ENCODE measurements at regions of chr11 and their contacts with region 1.

Region 1: DNA sequence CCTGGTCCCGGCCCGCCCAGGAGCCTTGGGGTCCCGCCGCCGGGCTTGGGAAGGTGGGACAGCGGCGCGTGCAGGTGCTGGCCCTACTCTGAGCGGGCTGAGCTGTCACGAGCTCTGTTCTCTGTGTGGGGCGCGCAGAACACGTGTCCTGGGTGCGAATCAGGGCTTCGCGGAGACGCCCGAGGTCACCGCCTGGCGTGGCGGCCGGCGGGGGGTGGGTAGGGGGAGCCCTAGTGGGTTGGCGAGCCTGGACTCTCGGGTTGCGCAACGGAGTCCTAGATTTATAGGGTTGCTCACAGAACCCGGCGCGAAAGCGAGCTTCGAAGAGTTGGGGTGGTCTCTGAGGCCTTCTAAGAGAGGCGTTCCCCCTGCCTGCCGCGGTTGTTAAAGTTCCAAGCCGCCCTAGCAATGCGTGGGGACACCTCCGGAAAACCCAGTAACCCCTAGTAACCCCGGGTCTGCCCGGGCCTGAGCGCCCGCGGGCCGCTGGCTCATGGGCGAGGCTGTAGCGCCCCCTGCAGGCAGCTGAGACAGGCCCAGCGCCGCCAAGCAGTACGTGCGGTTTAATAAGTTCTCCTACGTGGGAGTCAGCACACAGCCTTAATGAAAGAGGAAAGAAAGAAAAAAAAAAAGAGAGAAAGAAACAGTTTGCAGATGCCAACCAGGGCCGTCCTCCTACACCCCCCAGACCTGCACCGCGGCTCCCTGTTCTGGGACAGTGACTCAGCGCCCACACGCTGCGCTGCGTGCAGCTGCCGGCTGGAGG is 2.8 kb downstream of the ADM start:
- DNase-seq: peak; percentile 90
- H3K4me3 Mint-ChIP-seq: peak overlapping the region; percentile 89
- H3K27ac Mint-ChIP-seq: peak overlapping the region; percentile 71
- H3K4me1 Mint-ChIP-seq: peaks cover 38% of the 10 kb centered on the region
- H3K27me3 Mint-ChIP-seq: peaks cover 42% of the 10 kb centered on the region

Region 2: GRCh38 chr11:8688414-8689362 is 1618.9 kb before region 1 on chr11:
- CTCF ChIA-PET with region 1: no interaction called
- POLR2A ChIA-PET with region 1: no interaction called
- intact Hi-C with region 1: loop called (anchors 10 kb)
- DNase-seq: peak; percentile 94
- H3K4me3 Mint-ChIP-seq: peak overlapping the region; percentile 97
- H3K27ac Mint-ChIP-seq: peak overlapping the region; percentile 88
- H3K4me1 Mint-ChIP-seq: peaks cover 57% of the 10 kb centered on the region
- H3K27me3 Mint-ChIP-seq: no peaks in the 10 kb centered on the region

Region 3: GRCh38 chr11:9613118-9613829 is 694.4 kb before region 1 on chr11:
- CTCF ChIA-PET with region 1: interaction called, 4 read pairs
- POLR2A ChIA-PET with region 1: no interaction called
- intact Hi-C with region 1: loop called (anchors 5 kb)
- DNase-seq: peak; percentile 93
- H3K4me3 Mint-ChIP-seq: peak overlapping the region; percentile 81
- H3K27ac Mint-ChIP-seq: peak overlapping the region; percentile 97
- H3K4me1 Mint-ChIP-seq: peaks cover 34% of the 10 kb centered on the region
- H3K27me3 Mint-ChIP-seq: no peaks in the 10 kb centered on the region

Region 4: GRCh38 chr11:9861860-9862725 is 445.5 kb before region 1 on chr11:
- CTCF ChIA-PET with region 1: interaction called, 10 read pairs
- POLR2A ChIA-PET with region 1: no interaction called
- intact Hi-C with region 1: loop called (anchors 1 kb)
- DNase-seq: peak; percentile 65
- H3K4me3 Mint-ChIP-seq: no peak overlapping the region
- H3K27ac Mint-ChIP-seq: no peak overlapping the region
- H3K4me1 Mint-ChIP-seq: peaks cover 27% of the 10 kb centered on the region
- H3K27me3 Mint-ChIP-seq: no peaks in the 10 kb centered on the region

Region 5: GRCh38 chr11:10208131-10208575 is 99.5 kb before region 1 on chr11:
- CTCF ChIA-PET with region 1: interaction called, 96 read pairs
- POLR2A ChIA-PET with region 1: interaction called, 3 read pairs
- intact Hi-C with region 1: loop called (anchors 1 kb)
- DNase-seq: no peak
- H3K4me3 Mint-ChIP-seq: no peak overlapping the region
- H3K27ac Mint-ChIP-seq: no peak overlapping the region
- H3K4me1 Mint-ChIP-seq: no peaks in the 10 kb centered on the region
- H3K27me3 Mint-ChIP-seq: no peaks in the 10 kb centered on the region

Region 6: GRCh38 chr11:10317776-10318526 is 10.3 kb after region 1 on chr11:
- CTCF ChIA-PET with region 1: interaction called, 17 read pairs
- POLR2A ChIA-PET with region 1: interaction called, 3 read pairs
- intact Hi-C with region 1: loop called (anchors 1 kb)
- DNase-seq: no peak
- H3K4me3 Mint-ChIP-seq: no peak overlapping the region
- H3K27ac Mint-ChIP-seq: no peak overlapping the region
- H3K4me1 Mint-ChIP-seq: peaks cover 7% of the 10 kb centered on the region
- H3K27me3 Mint-ChIP-seq: peaks cover 16% of the 10 kb centered on the region

Region 7: DNA sequence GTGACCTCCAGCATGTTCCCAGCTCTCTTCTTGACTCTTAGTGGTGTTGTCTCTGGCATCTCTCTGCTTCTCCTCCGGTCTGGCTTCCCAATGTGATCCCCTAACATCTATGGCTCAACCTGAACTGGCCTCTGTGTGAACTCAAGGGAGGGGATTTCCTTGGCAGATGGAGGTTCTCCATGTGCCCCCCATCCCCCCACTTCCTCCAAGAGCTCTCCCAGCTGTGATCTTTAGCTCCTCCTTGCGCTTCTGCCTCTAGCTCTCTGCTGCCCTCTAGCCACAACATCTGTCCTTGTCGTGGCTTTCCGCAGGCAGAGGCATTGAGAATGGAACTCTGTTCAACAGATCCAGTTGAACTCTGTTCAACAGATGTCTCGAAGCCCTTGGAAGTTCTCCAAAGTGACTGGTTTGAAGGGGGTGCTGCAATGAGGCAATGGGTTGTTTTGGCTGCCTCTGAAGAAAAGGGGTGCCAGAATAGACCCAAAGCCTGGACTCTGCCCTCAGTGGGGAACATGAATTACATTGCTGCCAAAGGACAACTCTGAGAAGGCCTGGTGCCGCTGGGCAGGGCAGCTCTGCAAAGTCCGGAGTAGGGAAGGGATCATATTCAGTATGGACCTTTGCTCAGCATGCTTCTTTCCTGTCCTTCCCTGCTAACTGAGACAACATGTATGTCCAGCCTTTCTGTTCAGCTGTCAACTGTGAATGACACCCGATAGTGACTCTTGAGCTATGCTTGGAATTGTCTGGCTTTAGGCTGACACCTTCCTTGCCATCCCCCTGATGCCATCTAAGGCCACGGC is 59.1 kb after region 1 on chr11:
- CTCF ChIA-PET with region 1: interaction called, 9 read pairs
- POLR2A ChIA-PET with region 1: interaction called, 3 read pairs
- intact Hi-C with region 1: loop called (anchors 1 kb)
- DNase-seq: peak; percentile 79
- H3K4me3 Mint-ChIP-seq: no peak overlapping the region
- H3K27ac Mint-ChIP-seq: no peak overlapping the region
- H3K4me1 Mint-ChIP-seq: peaks cover 6% of the 10 kb centered on the region
- H3K27me3 Mint-ChIP-seq: peaks cover 3% of the 10 kb centered on the region